Activated CD8-positive, alpha-beta T cell treated with anti-CD3 and anti-CD28 coated beads, Interleukin-2, amount 10 ng/mL, durations not matched to agents 7 days and 5 days (primary cell): ENCODE measurements at regions of chr1 and their contacts with region 1.

Region 1: GRCh38 chr1:92536980-92537884 is 50.5 kb upstream of the GFI1 start:
- DNase-seq: peak; percentile 51
- ATAC-seq: peak; percentile 82
- H3K4me3 Mint-ChIP-seq: peak overlapping the region; percentile 60
- H3K27ac Mint-ChIP-seq: peak overlapping the region; percentile 91
- H3K4me1 Mint-ChIP-seq: peaks cover 70% of the 10 kb centered on the region
- H3K27me3 Mint-ChIP-seq: no peaks in the 10 kb centered on the region

Region 2: GRCh38 chr1:92583821-92584760 is 46.9 kb after region 1 on chr1:
- CTCF ChIA-PET with region 1: interaction called, 5 read pairs
- POLR2A ChIA-PET with region 1: interaction called, 17 read pairs
- DNase-seq: no peak
- ATAC-seq: peak; percentile 85
- H3K4me3 Mint-ChIP-seq: peak overlapping the region; percentile 72
- H3K27ac Mint-ChIP-seq: peak overlapping the region; percentile 88
- H3K4me1 Mint-ChIP-seq: peaks cover 51% of the 10 kb centered on the region
- H3K27me3 Mint-ChIP-seq: no peaks in the 10 kb centered on the region

Region 3: DNA sequence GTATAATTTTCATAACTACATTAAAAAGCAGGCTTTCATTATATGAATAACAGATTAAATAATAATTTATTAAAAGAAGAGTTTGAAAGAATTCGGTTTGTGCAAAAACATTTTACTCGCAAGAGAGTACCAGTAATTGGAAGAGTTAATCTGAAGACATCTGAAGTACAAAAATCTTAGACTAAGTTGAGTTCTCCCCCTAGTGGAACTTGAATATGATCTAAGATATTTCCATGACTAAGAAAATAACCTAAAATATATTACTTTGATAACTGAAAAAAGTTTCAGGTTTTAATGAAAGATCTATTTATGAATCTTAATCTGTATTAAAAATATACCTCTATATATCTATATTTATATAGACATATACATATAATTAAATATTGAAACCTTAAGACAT is 62.0 kb after region 1 on chr1:
- CTCF ChIA-PET with region 1: interaction called, 13 read pairs
- POLR2A ChIA-PET with region 1: interaction called, 3 read pairs
- DNase-seq: no peak
- ATAC-seq: peak; percentile 61
- H3K4me3 Mint-ChIP-seq: no peak overlapping the region
- H3K27ac Mint-ChIP-seq: no peak overlapping the region
- H3K4me1 Mint-ChIP-seq: peaks cover 25% of the 10 kb centered on the region
- H3K27me3 Mint-ChIP-seq: no peaks in the 10 kb centered on the region